ENCODE measurements at regions of chr17 and their contacts with region 1.

Region 1: GRCh38 chr17:6913608-6914443 is 82.0 kb upstream of the ALOX12 start:
- DNase-seq: peak; percentile 65 to 85 (median 81)
- ATAC-seq: peak; percentile 91
- H3K4me3 ChIP-seq: peak overlapping the region; percentile 23 to 70
- H3K4me3 Mint-ChIP-seq: peak overlapping the region; percentile 89
- H3K27ac ChIP-seq: no peak overlapping the region
- H3K27ac Mint-ChIP-seq: no peak overlapping the region
- H3K4me1 ChIP-seq: peaks cover 5% of the 10 kb centered on the region
- H3K4me1 Mint-ChIP-seq: peaks cover 18% of the 10 kb centered on the region
- H3K27me3 ChIP-seq: no peaks in the 10 kb centered on the region
- H3K27me3 Mint-ChIP-seq: peaks cover 2% of the 10 kb centered on the region
- CTCF ChIP-seq: peak; percentile 91

Region 2: DNA sequence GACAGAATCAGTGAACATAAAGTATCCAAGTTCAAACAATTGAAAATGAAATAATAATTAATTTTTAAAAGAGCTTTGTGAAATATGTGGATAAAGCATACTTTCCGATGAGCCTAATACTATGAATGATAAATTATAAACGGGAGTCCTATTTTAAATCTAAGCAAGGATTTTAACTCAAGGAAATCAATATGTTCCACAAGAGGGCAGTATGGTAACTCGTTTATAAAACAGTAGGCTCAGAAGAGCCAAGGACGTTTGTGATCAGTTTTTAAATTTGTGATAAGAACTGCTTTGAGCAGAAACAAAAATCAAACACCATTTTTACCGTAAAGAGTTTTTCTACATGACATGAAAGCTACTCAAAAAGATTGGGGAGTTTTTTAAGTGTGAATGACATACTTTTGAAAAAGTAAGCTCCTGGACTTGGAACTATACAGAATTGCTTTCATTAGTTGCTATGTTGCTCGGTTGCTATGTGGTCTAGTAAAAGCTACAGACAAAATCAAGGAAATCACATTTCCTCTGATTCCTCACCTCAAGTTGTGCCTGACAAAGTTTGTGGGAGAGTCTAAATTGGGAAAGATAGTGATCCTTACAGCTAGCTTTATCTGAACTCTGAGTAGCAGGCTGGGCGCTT is 70.5 kb before region 1 on chr17:
- CTCF ChIA-PET with region 1: interaction called, 14 read pairs
- POLR2A ChIA-PET with region 1: no interaction called
- intact Hi-C with region 1: no loop called
- DNase-seq: peak in 2 of 9 experiments; percentile 56 to 69
- ATAC-seq: no peak
- H3K4me3 ChIP-seq: no peak overlapping the region
- H3K4me3 Mint-ChIP-seq: no peak overlapping the region
- H3K27ac ChIP-seq: no peak overlapping the region
- H3K27ac Mint-ChIP-seq: no peak overlapping the region
- H3K4me1 ChIP-seq: no peaks in the 10 kb centered on the region
- H3K4me1 Mint-ChIP-seq: peaks cover 3% of the 10 kb centered on the region
- H3K27me3 ChIP-seq: peaks cover 0 to 3% of the 10 kb centered on the region in 2 experiments
- H3K27me3 Mint-ChIP-seq: peaks cover 26% of the 10 kb centered on the region
- CTCF ChIP-seq: peak; percentile 66

Region 3: GRCh38 chr17:6927290-6928126 is 13.7 kb after region 1 on chr17:
- CTCF ChIA-PET with region 1: interaction called, 13 read pairs
- POLR2A ChIA-PET with region 1: no interaction called
- intact Hi-C with region 1: no loop called
- DNase-seq: no peak
- ATAC-seq: no peak
- H3K4me3 ChIP-seq: no peak overlapping the region
- H3K4me3 Mint-ChIP-seq: no peak overlapping the region
- H3K27ac ChIP-seq: no peak overlapping the region
- H3K27ac Mint-ChIP-seq: no peak overlapping the region
- H3K4me1 ChIP-seq: peaks cover 18% of the 10 kb centered on the region
- H3K4me1 Mint-ChIP-seq: peaks cover 16% of the 10 kb centered on the region
- H3K27me3 ChIP-seq: no peaks in the 10 kb centered on the region
- H3K27me3 Mint-ChIP-seq: no peaks in the 10 kb centered on the region
- CTCF ChIP-seq: no peak

Region 4: DNA sequence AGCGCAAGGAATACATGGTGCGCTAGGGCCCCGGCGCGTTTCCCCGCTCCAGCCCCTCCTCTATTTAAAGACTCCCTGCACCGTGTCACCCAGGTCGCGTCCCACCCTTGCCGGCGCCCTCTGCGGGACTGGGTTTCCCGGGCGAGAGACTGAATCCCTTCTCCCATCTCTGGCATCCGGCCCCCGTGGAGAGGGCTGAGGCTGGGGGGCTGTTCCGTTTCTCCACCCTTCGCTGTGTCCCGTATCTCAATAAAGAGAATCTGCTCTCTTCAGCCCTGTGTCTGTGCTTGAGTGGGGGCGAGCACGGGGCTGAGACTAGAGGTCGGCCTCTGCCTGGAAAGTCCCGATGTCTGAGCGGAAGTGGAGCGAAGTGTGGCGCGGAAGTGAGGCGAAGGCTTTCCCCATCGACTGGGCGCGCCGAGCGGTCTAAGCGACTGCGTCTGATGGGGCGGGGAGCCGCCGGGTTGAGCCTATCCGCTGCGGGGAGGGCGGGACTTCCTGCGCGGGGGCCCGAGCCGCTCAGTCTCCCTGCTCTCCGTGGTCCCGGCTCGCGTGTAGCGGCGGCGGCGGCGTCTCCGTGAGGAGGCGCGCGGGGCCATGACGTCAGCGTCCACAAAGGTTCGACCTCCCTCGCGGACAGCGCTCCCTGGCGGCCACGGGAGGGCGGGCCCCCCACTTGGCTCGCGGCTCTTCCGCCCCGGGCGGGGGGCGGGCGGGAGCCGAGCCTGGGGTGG is 100.6 kb after region 1 on chr17:
- CTCF ChIA-PET with region 1: interaction called, 106 read pairs
- POLR2A ChIA-PET with region 1: interaction called, 3 read pairs
- intact Hi-C with region 1: no loop called
- DNase-seq: peak; percentile 94 to 100 (median 97)
- ATAC-seq: peak; percentile 79
- H3K4me3 ChIP-seq: peak overlapping the region; percentile 69 to 70
- H3K4me3 Mint-ChIP-seq: peak overlapping the region; percentile 98
- H3K27ac ChIP-seq: peak overlapping the region; percentile 95 to 99
- H3K27ac Mint-ChIP-seq: peak overlapping the region; percentile 100
- H3K4me1 ChIP-seq: peaks cover 63% of the 10 kb centered on the region
- H3K4me1 Mint-ChIP-seq: peaks cover 78% of the 10 kb centered on the region
- H3K27me3 ChIP-seq: no peaks in the 10 kb centered on the region
- H3K27me3 Mint-ChIP-seq: no peaks in the 10 kb centered on the region
- CTCF ChIP-seq: peak; percentile 61

Region 5: GRCh38 chr17:7136266-7136877 is 222.5 kb after region 1 on chr17:
- CTCF ChIA-PET with region 1: interaction called, 8 read pairs
- POLR2A ChIA-PET with region 1: interaction called, 3 read pairs
- intact Hi-C with region 1: loop called (anchors 1 to 2 kb)
- DNase-seq: peak; percentile 56 to 88 (median 82)
- ATAC-seq: no peak
- H3K4me3 ChIP-seq: no peak overlapping the region
- H3K4me3 Mint-ChIP-seq: no peak overlapping the region
- H3K27ac ChIP-seq: no peak overlapping the region
- H3K27ac Mint-ChIP-seq: no peak overlapping the region
- H3K4me1 ChIP-seq: peaks cover 6% of the 10 kb centered on the region
- H3K4me1 Mint-ChIP-seq: peaks cover 22% of the 10 kb centered on the region
- H3K27me3 ChIP-seq: no peaks in the 10 kb centered on the region
- H3K27me3 Mint-ChIP-seq: peaks cover 10% of the 10 kb centered on the region
- CTCF ChIP-seq: peak; percentile 99

Measured in CD8-positive, alpha-beta T cell (primary cell).